CD4-positive, alpha-beta T cell (primary cell): ENCODE measurements at regions of chr18 and their contacts with region 1.

Region 1: GRCh38 chr18:28469946-28470345 is 293.0 kb upstream of the CDH2 start:
- DNase-seq: no peak
- ATAC-seq: no peak
- H3K4me3 ChIP-seq: no peak overlapping the region
- H3K4me3 Mint-ChIP-seq: no peak overlapping the region
- H3K27ac ChIP-seq: no peak overlapping the region
- H3K27ac Mint-ChIP-seq: no peak overlapping the region
- H3K4me1 ChIP-seq: no peaks in the 10 kb centered on the region
- H3K4me1 Mint-ChIP-seq: no peaks in the 10 kb centered on the region
- H3K27me3 ChIP-seq: no peaks in the 10 kb centered on the region
- H3K27me3 Mint-ChIP-seq: no peaks in the 10 kb centered on the region
- CTCF ChIP-seq: no peak

Region 2: GRCh38 chr18:27954226-27954625 is 515.7 kb before region 1 on chr18:
- CTCF ChIA-PET with region 1: no interaction called
- POLR2A ChIA-PET with region 1: no interaction called
- intact Hi-C with region 1: loop called in 1 of 2 experiments (anchors 10 kb)
- DNase-seq: no peak
- ATAC-seq: no peak
- H3K4me3 ChIP-seq: no peak overlapping the region
- H3K4me3 Mint-ChIP-seq: no peak overlapping the region
- H3K27ac ChIP-seq: no peak overlapping the region
- H3K27ac Mint-ChIP-seq: no peak overlapping the region
- H3K4me1 ChIP-seq: no peaks in the 10 kb centered on the region
- H3K4me1 Mint-ChIP-seq: no peaks in the 10 kb centered on the region
- H3K27me3 ChIP-seq: no peaks in the 10 kb centered on the region
- H3K27me3 Mint-ChIP-seq: no peaks in the 10 kb centered on the region
- CTCF ChIP-seq: no peak

Region 3: DNA sequence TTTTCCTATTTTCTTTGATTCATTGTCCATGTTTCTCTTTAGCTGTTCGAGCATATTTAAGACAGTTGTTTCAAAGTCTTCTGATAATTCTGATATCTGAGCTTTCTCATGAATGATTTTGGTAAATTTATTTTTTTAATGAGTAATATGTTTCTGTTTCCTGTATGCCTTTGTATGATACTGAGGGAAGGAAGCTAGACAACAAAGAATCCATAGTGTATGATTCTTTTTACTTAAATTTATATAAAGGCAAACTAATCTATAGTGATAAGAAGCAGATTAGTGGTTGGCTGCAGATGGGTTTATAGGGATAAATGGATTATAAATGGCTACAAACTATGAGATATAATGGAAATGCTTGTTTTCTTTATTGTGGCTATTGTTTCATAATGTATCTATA is 59.7 kb after region 1 on chr18:
- CTCF ChIA-PET with region 1: no interaction called
- POLR2A ChIA-PET with region 1: no interaction called
- intact Hi-C with region 1: loop called in 1 of 2 experiments (anchors 10 kb)
- DNase-seq: no peak
- ATAC-seq: no peak
- H3K4me3 ChIP-seq: no peak overlapping the region
- H3K4me3 Mint-ChIP-seq: no peak overlapping the region
- H3K27ac ChIP-seq: no peak overlapping the region
- H3K27ac Mint-ChIP-seq: no peak overlapping the region
- H3K4me1 ChIP-seq: no peaks in the 10 kb centered on the region
- H3K4me1 Mint-ChIP-seq: no peaks in the 10 kb centered on the region
- H3K27me3 ChIP-seq: no peaks in the 10 kb centered on the region
- H3K27me3 Mint-ChIP-seq: no peaks in the 10 kb centered on the region
- CTCF ChIP-seq: no peak

Region 4: GRCh38 chr18:28781616-28782362 is 311.8 kb after region 1 on chr18:
- CTCF ChIA-PET with region 1: no interaction called
- POLR2A ChIA-PET with region 1: no interaction called
- intact Hi-C with region 1: no loop called
- DNase-seq: peak in 1 of 14 experiments; percentile 21
- ATAC-seq: no peak
- H3K4me3 ChIP-seq: no peak overlapping the region
- H3K4me3 Mint-ChIP-seq: no peak overlapping the region
- H3K27ac ChIP-seq: no peak overlapping the region
- H3K27ac Mint-ChIP-seq: no peak overlapping the region
- H3K4me1 ChIP-seq: no peaks in the 10 kb centered on the region
- H3K4me1 Mint-ChIP-seq: peaks cover 12% of the 10 kb centered on the region
- H3K27me3 ChIP-seq: no peaks in the 10 kb centered on the region
- H3K27me3 Mint-ChIP-seq: no peaks in the 10 kb centered on the region
- CTCF ChIP-seq: no peak